ENCODE measurements at regions of chr15 and their contacts with region 1.

Region 1: GRCh38 chr15:77419836-77420609 is at the start of gene PEAK1:
- DNase-seq: peak; percentile 99
- H3K4me3 ChIP-seq: peak within 1 kb of the TSS; percentile 65 to 81
- H3K27ac ChIP-seq: peak within 1 kb of the TSS; percentile 89 to 91
- H3K4me1 ChIP-seq: no peaks in the 10 kb centered on the region
- H3K27me3 ChIP-seq: no peaks in the 10 kb centered on the region
- CTCF ChIP-seq: no peak
- POLR2A ChIP-seq: peak; percentile 74
- total RNA-seq, gene PEAK1: 11.3 to 108 TPM

Region 2: DNA sequence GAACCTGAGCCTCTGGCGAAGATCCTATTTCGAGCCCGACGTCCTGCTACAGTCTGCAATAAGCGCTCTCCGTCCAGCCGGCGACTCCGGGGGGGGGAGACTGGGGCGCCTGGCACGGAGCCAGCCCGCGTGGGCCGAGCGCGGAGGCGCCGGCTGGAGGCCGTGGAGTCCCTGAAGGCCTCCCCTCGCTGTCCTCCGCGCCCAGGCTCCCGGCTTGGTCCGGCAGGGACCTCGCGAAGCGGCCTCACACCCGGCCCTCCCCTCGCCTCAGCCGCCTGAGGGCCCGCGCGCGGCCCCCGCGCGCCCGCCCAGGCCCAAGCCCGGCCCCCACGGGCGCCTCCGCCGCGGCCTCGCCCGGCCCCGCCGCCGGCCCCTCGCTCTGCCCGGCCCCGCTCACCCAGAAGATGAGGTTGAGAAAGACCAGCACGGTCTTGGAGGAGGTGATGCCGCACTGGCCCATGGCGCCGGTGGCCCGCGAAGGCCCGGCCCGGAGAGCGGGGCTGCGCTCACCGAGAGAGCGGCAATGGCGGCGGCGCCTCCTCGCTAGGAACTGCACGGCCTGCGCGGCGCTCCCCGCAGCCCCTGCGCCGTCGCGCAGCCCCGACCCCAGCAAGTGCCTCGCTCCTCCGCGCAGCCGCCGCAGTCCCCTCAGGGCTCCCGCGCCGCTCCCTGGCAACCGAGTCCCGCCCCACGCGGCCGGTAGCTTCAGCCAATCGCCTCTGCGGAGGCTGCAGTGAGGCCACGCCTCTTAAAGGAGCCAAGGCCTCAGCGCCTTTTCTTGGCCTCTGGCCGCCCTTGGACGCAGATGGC is 349.3 kb before region 1 on chr15 and contains the start of gene TSPAN3:
- intact Hi-C with region 1: loop called (anchors 5 kb)
- DNase-seq: peak; percentile 88
- H3K4me3 ChIP-seq: peak within 1 kb of the TSS; percentile 75 to 87
- H3K27ac ChIP-seq: peak within 1 kb of the TSS; percentile 75 to 80
- H3K4me1 ChIP-seq: no peaks in the 10 kb centered on the region
- H3K27me3 ChIP-seq: no peaks in the 10 kb centered on the region
- CTCF ChIP-seq: peak in 1 of 4 experiments; percentile 8
- POLR2A ChIP-seq: peak; percentile 94
- total RNA-seq, gene TSPAN3: 234 to 238 TPM

Region 3: GRCh38 chr15:77118882-77119321 is 301.1 kb before region 1 on chr15:
- intact Hi-C with region 1: loop called (anchors 10 kb)
- DNase-seq: peak; percentile 42
- H3K4me3 ChIP-seq: no peak overlapping the region
- H3K27ac ChIP-seq: no peak overlapping the region
- H3K4me1 ChIP-seq: no peaks in the 10 kb centered on the region
- H3K27me3 ChIP-seq: no peaks in the 10 kb centered on the region
- CTCF ChIP-seq: peak in 3 of 4 experiments; percentile 58 to 82 (median 70)
- POLR2A ChIP-seq: no peak

Region 4: DNA sequence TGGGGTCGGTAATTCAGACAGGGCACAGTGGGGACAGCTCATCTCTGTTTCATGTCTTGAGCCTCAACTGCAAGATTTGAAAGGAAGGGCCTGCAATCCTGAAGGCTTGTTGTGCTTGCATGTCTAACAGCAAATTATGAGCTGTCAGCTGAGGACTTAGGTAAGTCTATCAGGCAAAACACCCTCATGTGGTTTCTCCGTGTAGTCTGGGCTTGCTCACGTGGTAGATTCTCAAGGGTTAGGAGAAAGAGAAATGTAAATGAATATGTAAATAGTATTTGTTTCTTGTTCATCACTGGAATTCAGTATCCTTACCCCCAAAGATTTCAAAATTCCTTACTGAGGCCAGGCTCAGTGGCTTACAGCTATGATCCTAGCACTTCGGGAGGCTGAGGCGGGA is 1057.3 kb after region 1 on chr15:
- intact Hi-C with region 1: no loop called
- DNase-seq: no peak
- H3K4me3 ChIP-seq: no peak overlapping the region
- H3K27ac ChIP-seq: no peak overlapping the region
- H3K4me1 ChIP-seq: no peaks in the 10 kb centered on the region
- H3K27me3 ChIP-seq: no peaks in the 10 kb centered on the region
- CTCF ChIP-seq: no peak
- POLR2A ChIP-seq: no peak